Heart right ventricle (tissue), 16 donors: ENCODE measurements at regions of chr11 and their contacts with region 1.

Region 1: DNA sequence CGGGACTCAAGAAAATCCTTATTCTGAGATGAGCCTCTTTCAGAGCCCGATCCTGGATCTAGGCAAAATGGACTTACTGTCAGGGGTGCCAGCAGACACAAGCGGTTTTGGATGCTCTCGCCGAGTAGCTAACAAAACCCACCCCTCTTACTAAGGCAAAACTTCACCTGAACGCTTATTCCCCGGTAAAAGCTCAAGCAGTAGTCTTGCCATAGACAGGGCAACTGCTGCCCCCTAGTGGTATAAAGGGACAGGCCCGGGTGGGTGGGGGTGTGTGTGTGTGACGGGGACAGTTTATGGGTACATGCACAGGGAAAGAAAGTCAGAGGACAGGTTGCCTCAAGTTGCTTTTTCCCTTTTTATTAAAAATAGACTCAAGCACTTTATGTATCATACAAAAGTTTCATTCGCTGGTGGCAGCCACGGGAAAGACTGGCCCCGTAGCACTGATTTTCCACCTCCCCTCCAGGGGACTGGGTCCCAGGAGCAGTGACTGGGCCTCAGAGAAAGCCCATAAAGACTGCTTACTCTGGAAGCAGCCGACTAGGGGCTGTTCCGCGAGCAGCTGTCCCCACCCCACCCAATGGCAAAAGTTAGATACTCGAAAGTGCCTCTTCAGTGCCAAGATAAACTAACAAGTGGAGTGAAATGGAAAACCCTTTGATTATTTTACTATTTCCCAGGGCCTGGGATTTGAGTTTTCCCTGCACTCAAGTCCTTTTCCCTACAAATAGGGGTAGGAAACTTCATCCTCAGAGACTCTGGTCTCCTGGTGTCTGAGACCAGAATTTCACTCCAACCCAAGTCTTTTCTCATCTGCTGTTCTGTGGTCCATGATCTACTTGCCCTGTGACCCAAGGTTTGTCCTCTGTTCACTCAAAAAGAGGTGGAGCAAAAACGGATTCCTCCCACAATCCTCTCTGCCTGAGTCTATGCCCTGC is 4.7 kb downstream of the YPEL4 start:
- DNase-seq: peak; percentile 76 to 86
- ATAC-seq: peak; percentile 75 to 81 (median 77)
- H3K4me3 ChIP-seq: no peak overlapping the region
- H3K27ac ChIP-seq: peak overlapping the region in 9 of 10 donors; percentile 11 to 68 (median 47)
- H3K4me1 ChIP-seq: peaks cover 3 to 80% (median 56%) of the 10 kb centered on the region in 9 donors
- H3K27me3 ChIP-seq: peaks cover 0 to 55% (median 37%) of the 10 kb centered on the region in 7 donors
- CTCF ChIP-seq: peak; percentile 72 to 92 (median 88)

Region 2: GRCh38 chr11:57340039-57340615 is 304.9 kb before region 1 on chr11:
- intact Hi-C with region 1: loop called in 9 of 10 experiments (anchors 5 to 10 kb)
- DNase-seq: no peak
- ATAC-seq: no peak
- H3K4me3 ChIP-seq: no peak overlapping the region
- H3K27ac ChIP-seq: no peak overlapping the region
- H3K4me1 ChIP-seq: peaks cover 0 to 9% (median 6%) of the 10 kb centered on the region in 9 donors
- H3K27me3 ChIP-seq: peaks cover 0 to 9% (median 0%) of the 10 kb centered on the region in 7 donors
- CTCF ChIP-seq: peak in 4 of 9 donors; percentile 8 to 27 (median 14)

Region 3: GRCh38 chr11:57456960-57457642 is 187.9 kb before region 1 on chr11:
- intact Hi-C with region 1: loop called in 8 of 10 experiments (anchors 5 to 10 kb)
- DNase-seq: peak; percentile 89 to 90
- ATAC-seq: peak; percentile 85 to 92 (median 87)
- H3K4me3 ChIP-seq: peak overlapping the region in 1 of 10 donors; percentile 16
- H3K27ac ChIP-seq: no peak overlapping the region
- H3K4me1 ChIP-seq: peaks cover 4 to 42% (median 35%) of the 10 kb centered on the region in 9 donors
- H3K27me3 ChIP-seq: peaks cover 13 to 52% (median 44%) of the 10 kb centered on the region in 7 donors
- CTCF ChIP-seq: peak; percentile 99

Region 4: DNA sequence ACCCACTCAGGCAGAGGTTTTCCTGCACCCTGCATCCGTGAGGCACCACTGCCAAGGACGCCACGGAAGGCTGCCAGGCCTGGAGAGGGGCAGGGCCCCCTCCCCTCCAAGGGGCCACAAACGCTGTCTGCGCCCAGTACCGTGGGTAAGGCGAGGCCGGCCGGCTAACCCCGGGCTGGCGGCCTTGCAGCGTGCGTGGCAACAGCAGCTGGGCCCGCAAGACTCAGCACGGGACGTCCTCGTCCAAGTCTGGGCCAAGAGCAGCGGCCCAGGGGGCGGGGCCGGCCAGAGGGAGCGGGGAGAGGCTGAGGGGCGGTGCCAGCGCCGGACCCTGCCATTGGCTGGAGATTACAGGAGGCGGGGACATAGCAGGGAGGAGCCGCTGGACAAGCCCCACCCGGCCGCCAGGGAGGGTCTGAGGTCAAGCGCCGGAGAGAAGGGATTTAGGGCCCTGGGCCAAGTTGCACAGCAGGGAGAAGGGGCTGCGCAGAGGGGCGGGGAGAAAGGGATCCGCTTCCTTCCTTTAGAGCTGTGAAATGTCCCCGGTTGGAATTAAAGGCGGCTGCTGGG is 145.5 kb before region 1 on chr11:
- intact Hi-C with region 1: loop called in 1 of 10 experiments (anchors 10 kb)
- DNase-seq: peak; percentile 97 to 99
- ATAC-seq: peak; percentile 99 to 100 (median 99)
- H3K4me3 ChIP-seq: peak overlapping the region in 9 of 10 donors; percentile 2 to 47 (median 38)
- H3K27ac ChIP-seq: peak overlapping the region; percentile 48 to 90 (median 78)
- H3K4me1 ChIP-seq: peaks cover 7 to 36% (median 30%) of the 10 kb centered on the region in 9 donors
- H3K27me3 ChIP-seq: no peaks in the 10 kb centered on the region
- CTCF ChIP-seq: peak in 1 of 9 donors; percentile 16

Region 5: GRCh38 chr11:57567515-57568329 is 77.3 kb before region 1 on chr11 and contains the start of gene UBE2L6:
- intact Hi-C with region 1: loop called in 9 of 10 experiments (anchors 2 to 5 kb)
- DNase-seq: peak; percentile 50 to 67
- ATAC-seq: peak; percentile 75 to 91 (median 85)
- H3K4me3 ChIP-seq: peak within 1 kb of the TSS; percentile 23 to 90 (median 80)
- H3K27ac ChIP-seq: peak within 1 kb of the TSS; percentile 51 to 94 (median 84)
- H3K4me1 ChIP-seq: peaks cover 0 to 52% (median 12%) of the 10 kb centered on the region in 9 donors
- H3K27me3 ChIP-seq: no peaks in the 10 kb centered on the region
- CTCF ChIP-seq: peak in 4 of 9 donors; percentile 78 to 89 (median 86)
- total RNA-seq, gene UBE2L6: 9.7 to 156 (median 17.7) TPM